Cardiac septum (tissue), 1 donor: ENCODE measurements at regions of chr1 and their contacts with region 1.

Region 1: DNA sequence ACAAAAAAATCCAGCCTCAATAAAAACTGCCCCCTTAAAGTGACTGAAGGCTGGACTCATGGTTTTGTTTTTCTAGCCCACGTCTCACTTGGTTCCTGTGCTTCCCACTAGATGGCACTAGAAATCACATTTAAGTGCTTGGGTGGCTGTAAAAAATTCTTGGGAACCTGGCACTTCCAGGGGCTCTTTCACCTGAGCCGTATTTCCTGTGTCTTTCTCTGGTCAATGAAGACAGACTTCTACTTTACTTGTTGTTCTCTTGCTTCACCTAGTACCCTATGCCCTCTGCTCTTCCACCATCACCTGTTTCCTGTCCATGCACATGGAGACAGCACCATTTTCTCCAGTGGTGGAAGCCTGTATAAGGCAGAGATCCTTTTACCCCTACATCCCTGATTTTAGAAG is 20.0 kb downstream of the METTL13 start:
- DNase-seq: no peak

Region 2: DNA sequence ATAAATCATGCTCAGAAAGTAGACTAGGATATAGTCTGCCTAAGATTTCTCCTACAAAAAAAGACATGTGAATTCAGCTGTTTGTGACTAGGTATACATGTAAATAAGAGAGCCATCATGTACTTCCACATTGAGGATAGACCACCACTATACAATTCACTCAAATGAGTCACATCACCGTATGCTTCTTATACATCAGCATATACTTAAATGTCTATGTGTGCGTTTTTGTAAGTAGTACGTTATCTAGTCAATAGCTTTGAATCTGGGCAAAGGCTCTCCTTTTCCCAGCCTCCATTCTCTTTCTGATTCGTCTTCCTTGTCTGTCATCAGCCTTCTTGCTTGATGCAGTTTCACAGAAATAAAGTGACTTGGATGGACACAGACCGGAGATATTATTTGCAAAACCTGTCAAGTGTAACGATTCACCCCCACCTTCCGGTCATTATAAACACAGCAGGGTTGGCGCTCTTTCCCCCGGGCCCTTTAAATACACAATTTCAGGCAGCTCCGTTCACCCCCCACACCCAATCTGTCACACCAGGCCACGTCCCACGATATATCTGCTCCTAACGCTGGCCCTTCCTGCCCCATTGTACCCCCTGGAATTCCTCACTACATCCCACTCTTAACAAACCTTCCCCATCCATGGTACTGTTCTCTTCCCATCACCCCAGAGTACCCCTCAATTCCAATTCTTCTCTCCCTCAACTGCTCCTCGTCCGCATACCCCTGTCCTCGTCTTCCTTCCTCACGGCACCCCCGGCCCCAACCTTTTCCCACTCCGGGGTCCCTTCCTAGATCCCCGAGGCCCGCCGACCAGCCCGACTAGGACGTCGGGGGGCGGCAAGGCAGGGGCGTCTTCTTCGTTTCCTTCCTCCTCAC is 60.3 kb before region 1 on chr1:
- intact Hi-C with region 1: no loop called
- DNase-seq: no peak

Region 3: GRCh38 chr1:171984850-171985485 is 183.5 kb after region 1 on chr1:
- intact Hi-C with region 1: loop called (anchors 1 kb)
- DNase-seq: no peak

Region 4: DNA sequence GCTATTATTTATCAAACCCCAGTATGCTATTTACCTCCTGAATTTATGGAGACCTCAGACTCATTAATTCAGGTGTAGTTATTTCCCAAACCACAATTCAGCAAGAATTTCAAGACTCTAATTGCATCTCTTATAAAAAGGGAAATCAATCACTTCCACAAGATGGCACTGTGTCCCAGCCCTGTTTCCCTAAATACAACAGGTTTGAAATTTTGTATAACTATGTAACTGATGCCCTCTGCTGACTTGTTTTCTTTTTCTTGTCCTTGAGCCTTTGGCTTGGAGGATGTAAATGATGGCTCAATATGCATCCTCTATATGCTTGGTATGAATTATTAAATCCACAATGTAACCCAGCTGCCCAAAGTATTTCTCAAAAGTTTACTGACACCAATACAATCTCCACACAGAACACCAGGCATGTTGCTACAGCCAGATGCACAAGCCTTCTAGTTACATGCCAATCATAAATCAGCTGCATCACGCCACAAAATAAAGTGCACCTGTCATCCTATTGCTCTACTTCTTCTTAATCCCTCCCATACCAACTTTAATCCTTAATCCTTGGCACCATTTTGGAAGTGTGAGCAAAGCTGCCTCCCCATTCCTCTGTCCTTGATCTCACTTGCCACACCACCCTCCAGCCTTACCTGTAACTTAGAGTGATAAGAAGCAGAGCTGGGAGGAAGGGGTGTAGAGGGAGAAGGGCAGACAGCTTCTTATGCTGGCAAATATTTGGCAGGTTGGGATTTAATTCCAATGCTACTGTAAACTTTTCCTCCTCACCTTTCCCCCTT is 628.0 kb after region 1 on chr1:
- intact Hi-C with region 1: loop called (anchors 10 kb)
- DNase-seq: no peak